ENCODE measurements at regions of chr7 and their contacts with region 1.

Region 1: DNA sequence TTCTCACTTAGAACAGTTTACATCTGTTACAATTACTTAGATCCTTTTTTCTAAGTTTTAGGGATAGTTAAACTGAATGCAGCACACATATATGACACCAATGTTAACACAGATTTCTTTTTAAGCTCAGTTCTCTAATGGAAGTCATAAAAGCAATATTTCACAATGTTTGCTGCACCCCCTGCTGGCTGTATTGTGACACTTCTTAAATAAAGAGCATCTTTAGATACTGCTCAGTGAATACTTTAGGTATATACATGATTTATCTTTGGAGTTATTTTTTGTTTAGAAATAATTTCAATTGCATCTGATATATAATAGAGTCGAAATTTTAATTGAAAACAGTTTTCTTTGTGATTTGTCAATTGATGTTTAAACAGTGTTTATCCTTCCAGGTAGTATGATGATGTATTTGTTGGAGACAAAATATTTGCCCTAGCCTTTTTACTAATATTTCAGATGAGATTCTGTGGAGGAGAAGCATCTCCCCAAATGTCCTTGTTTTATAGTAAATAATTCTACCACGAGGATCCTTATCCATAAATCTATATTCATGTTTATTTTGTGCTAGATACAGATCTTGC is 174.4 kb downstream of the ST7 start:
- DNase-seq: peak; percentile 23
- ATAC-seq: peak; percentile 82
- H3K4me3 ChIP-seq: no peak overlapping the region
- H3K27ac ChIP-seq: no peak overlapping the region
- H3K4me1 ChIP-seq: peaks cover 10% of the 10 kb centered on the region
- H3K27me3 ChIP-seq: no peaks in the 10 kb centered on the region
- CTCF ChIP-seq: peak; percentile 56 to 66 (median 64); a peak in 5 of 6 replicates
- EP300 ChIP-seq: no peak
- POLR2A ChIP-seq: no peak
- RAD21 ChIP-seq: peak; percentile 72

Region 2: GRCh38 chr7:116762971-116763370 is 364.7 kb before region 1 on chr7:
- CTCF ChIA-PET with region 1: no interaction called
- POLR2A ChIA-PET with region 1: no interaction called
- RAD21 ChIA-PET with region 1: no interaction called
- SMC1A ChIA-PET with region 1: no interaction called
- in situ Hi-C with region 1: no loop called
- intact Hi-C with region 1: no loop called
- DNase-seq: no peak
- ATAC-seq: no peak
- H3K4me3 ChIP-seq: no peak overlapping the region
- H3K27ac ChIP-seq: no peak overlapping the region
- H3K4me1 ChIP-seq: no peaks in the 10 kb centered on the region
- H3K27me3 ChIP-seq: peaks cover 0 to 5% of the 10 kb centered on the region in 2 experiments; a peak in 1 of 4 replicates
- CTCF ChIP-seq: no peak
- EP300 ChIP-seq: no peak
- POLR2A ChIP-seq: no peak
- RAD21 ChIP-seq: no peak

Region 3: GRCh38 chr7:116899308-116899707 is 228.4 kb before region 1 on chr7:
- CTCF ChIA-PET with region 1: interaction called, 15 read pairs
- POLR2A ChIA-PET with region 1: no interaction called
- RAD21 ChIA-PET with region 1: no interaction called
- SMC1A ChIA-PET with region 1: interaction called, 6 read pairs
- in situ Hi-C with region 1: no loop called
- intact Hi-C with region 1: no loop called
- DNase-seq: no peak
- ATAC-seq: peak; percentile 21; the same call in 1 of the 3 replicates
- H3K4me3 ChIP-seq: no peak overlapping the region
- H3K27ac ChIP-seq: no peak overlapping the region
- H3K4me1 ChIP-seq: no peaks in the 10 kb centered on the region
- H3K27me3 ChIP-seq: no peaks in the 10 kb centered on the region
- CTCF ChIP-seq: no peak
- EP300 ChIP-seq: no peak
- POLR2A ChIP-seq: no peak
- RAD21 ChIP-seq: no peak

Region 4: GRCh38 chr7:116942504-116942903 is 185.2 kb before region 1 on chr7:
- CTCF ChIA-PET with region 1: interaction called, 7 read pairs
- POLR2A ChIA-PET with region 1: no interaction called
- RAD21 ChIA-PET with region 1: interaction called, 4 read pairs
- SMC1A ChIA-PET with region 1: interaction called, 16 read pairs
- in situ Hi-C with region 1: no loop called
- intact Hi-C with region 1: no loop called
- DNase-seq: no peak
- ATAC-seq: no peak
- H3K4me3 ChIP-seq: no peak overlapping the region
- H3K27ac ChIP-seq: no peak overlapping the region
- H3K4me1 ChIP-seq: no peaks in the 10 kb centered on the region
- H3K27me3 ChIP-seq: no peaks in the 10 kb centered on the region; a peak in 1 of 4 replicates
- CTCF ChIP-seq: no peak
- EP300 ChIP-seq: no peak
- POLR2A ChIP-seq: no peak
- RAD21 ChIP-seq: no peak

Region 5: DNA sequence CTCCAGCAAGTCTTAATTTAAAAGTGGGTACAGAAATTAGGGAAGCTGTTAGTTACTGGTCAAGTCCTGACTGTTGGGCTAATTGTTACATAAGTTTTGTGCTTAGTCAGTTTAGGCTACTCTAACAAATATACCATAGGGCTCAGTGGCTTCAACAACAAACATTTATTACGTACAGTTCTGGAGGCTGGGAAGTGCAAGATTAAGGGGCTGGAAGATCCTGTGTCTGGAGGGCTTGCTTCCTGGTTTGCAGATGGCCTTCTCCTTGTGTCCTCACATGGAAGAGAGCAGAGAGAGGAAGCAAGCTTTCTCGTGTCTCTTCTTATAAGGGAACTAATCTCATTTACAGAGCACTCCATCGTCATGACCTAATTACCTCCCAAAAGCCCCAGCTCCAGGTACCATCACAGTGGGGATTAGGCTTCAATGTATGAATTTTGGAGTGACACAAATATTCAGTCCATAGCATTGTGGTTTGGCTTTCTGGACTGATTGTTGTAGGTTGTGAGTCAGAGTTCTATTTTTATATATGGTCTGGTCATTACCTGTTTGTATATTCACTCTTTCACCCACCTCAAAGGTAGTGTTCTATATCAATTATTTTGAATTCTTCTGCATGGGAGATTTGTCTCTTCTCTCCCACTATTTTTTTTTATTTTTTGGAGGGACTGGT is 157.3 kb before region 1 on chr7:
- CTCF ChIA-PET with region 1: interaction called, 35 read pairs
- POLR2A ChIA-PET with region 1: interaction called, 4 read pairs
- RAD21 ChIA-PET with region 1: interaction called, 4 read pairs
- SMC1A ChIA-PET with region 1: interaction called, 10 read pairs
- in situ Hi-C with region 1: no loop called
- intact Hi-C with region 1: no loop called
- DNase-seq: no peak
- ATAC-seq: peak; percentile 87
- H3K4me3 ChIP-seq: peak overlapping the region; percentile 20; the same call in 1 of the 2 replicates
- H3K27ac ChIP-seq: peak overlapping the region; percentile 57
- H3K4me1 ChIP-seq: peaks cover 21% of the 10 kb centered on the region
- H3K27me3 ChIP-seq: no peaks in the 10 kb centered on the region
- CTCF ChIP-seq: no peak
- EP300 ChIP-seq: peak in 1 of 2 experiments; percentile 24; a peak in 1 of 4 replicates
- POLR2A ChIP-seq: no peak
- RAD21 ChIP-seq: no peak

Region 6: DNA sequence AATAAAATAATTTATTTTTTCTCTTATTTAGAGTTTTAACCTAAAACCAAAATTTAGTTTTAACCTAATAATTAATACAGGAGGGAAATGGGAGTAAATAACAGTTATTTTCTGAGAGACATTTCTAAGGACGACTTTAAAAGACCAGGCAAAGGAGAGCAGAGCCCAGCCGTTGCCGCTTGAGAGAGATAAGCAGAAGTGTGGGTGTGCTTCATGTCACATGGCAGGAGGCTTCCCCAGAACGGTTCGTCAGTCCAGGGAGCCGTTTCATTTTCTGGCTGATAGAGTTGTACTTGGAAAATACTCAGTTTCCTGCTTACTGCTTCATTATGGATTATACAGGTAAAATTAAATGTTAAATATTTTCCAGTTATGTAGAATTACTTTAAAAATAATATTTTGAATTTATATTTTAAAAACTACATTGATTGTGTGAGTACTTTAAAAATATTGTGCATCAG is 113.0 kb before region 1 on chr7:
- CTCF ChIA-PET with region 1: interaction called, 85 read pairs
- POLR2A ChIA-PET with region 1: no interaction called
- RAD21 ChIA-PET with region 1: interaction called, 6 read pairs
- SMC1A ChIA-PET with region 1: interaction called, 158 read pairs
- in situ Hi-C with region 1: no loop called
- intact Hi-C with region 1: no loop called
- DNase-seq: no peak
- ATAC-seq: peak; percentile 52
- H3K4me3 ChIP-seq: peak overlapping the region; percentile 66; the same call in 1 of the 2 replicates
- H3K27ac ChIP-seq: peak overlapping the region; percentile 79
- H3K4me1 ChIP-seq: peaks cover 43% of the 10 kb centered on the region
- H3K27me3 ChIP-seq: no peaks in the 10 kb centered on the region
- CTCF ChIP-seq: no peak
- EP300 ChIP-seq: no peak
- POLR2A ChIP-seq: peak; percentile 51; the same call in 1 of the 2 replicates
- RAD21 ChIP-seq: no peak

Region 7: GRCh38 chr7:117072620-117073118 is 55.0 kb before region 1 on chr7:
- CTCF ChIA-PET with region 1: interaction called, 12 read pairs
- POLR2A ChIA-PET with region 1: no interaction called
- RAD21 ChIA-PET with region 1: interaction called, 4 read pairs
- SMC1A ChIA-PET with region 1: interaction called, 6 read pairs
- in situ Hi-C with region 1: no loop called
- intact Hi-C with region 1: no loop called
- DNase-seq: no peak
- ATAC-seq: no peak
- H3K4me3 ChIP-seq: no peak overlapping the region
- H3K27ac ChIP-seq: no peak overlapping the region
- H3K4me1 ChIP-seq: peaks cover 5% of the 10 kb centered on the region; the same call in 1 of the 2 replicates
- H3K27me3 ChIP-seq: no peaks in the 10 kb centered on the region
- CTCF ChIP-seq: no peak
- EP300 ChIP-seq: no peak
- POLR2A ChIP-seq: no peak
- RAD21 ChIP-seq: no peak

Region 8: GRCh38 chr7:117157241-117158209 is 29.8 kb after region 1 on chr7:
- CTCF ChIA-PET with region 1: interaction called, 16 read pairs
- POLR2A ChIA-PET with region 1: no interaction called
- RAD21 ChIA-PET with region 1: no interaction called
- SMC1A ChIA-PET with region 1: interaction called, 3 read pairs
- in situ Hi-C with region 1: no loop called
- intact Hi-C with region 1: no loop called
- DNase-seq: no peak
- ATAC-seq: peak; percentile 48; the same call in 2 of the 3 replicates
- H3K4me3 ChIP-seq: no peak overlapping the region
- H3K27ac ChIP-seq: no peak overlapping the region
- H3K4me1 ChIP-seq: no peaks in the 10 kb centered on the region
- H3K27me3 ChIP-seq: no peaks in the 10 kb centered on the region
- CTCF ChIP-seq: no peak
- EP300 ChIP-seq: no peak
- POLR2A ChIP-seq: no peak
- RAD21 ChIP-seq: no peak

Region 9: DNA sequence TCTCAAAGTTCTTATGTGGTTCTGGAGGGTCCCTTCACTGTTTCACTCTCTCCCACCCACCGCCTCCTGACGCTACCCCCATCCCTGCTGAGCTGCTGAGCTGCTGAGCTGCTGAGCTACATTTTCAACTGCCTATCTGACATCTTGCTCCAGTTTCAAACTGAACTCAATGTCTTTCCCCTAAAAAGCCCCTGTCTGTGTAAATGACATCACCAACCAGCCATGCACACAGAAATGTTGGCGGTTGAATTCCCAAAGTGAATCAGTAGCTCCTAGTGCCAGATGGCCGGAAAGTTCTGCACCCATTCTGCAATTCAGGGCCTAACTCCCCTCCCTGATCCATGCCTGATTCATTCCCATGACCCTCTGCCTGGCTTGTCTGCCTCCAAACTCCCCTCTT is 124.0 kb after region 1 on chr7:
- CTCF ChIA-PET with region 1: no interaction called
- POLR2A ChIA-PET with region 1: no interaction called
- RAD21 ChIA-PET with region 1: no interaction called
- SMC1A ChIA-PET with region 1: no interaction called
- in situ Hi-C with region 1: no loop called
- intact Hi-C with region 1: no loop called
- DNase-seq: peak; percentile 35
- ATAC-seq: peak; percentile 84
- H3K4me3 ChIP-seq: no peak overlapping the region
- H3K27ac ChIP-seq: no peak overlapping the region
- H3K4me1 ChIP-seq: peaks cover 4% of the 10 kb centered on the region
- H3K27me3 ChIP-seq: no peaks in the 10 kb centered on the region
- CTCF ChIP-seq: no peak
- EP300 ChIP-seq: peak in 1 of 2 experiments; percentile 49; a peak in 1 of 4 replicates
- POLR2A ChIP-seq: no peak
- RAD21 ChIP-seq: no peak